Vagina (tissue), 2 donors: ENCODE measurements at regions of chr3 and their contacts with region 1.

Region 1: GRCh38 chr3:186193534-186194450 is 84.9 kb upstream of the ETV5 start:
- DNase-seq: no peak
- H3K4me3 ChIP-seq: peak overlapping the region; percentile 30 to 33
- H3K27ac ChIP-seq: no peak overlapping the region
- H3K4me1 ChIP-seq: peaks cover 12% of the 10 kb centered on the region
- H3K27me3 ChIP-seq: no peaks in the 10 kb centered on the region
- CTCF ChIP-seq: no peak
- POLR2A ChIP-seq: no peak

Region 2: GRCh38 chr3:186124592-186124991 is 69.2 kb before region 1 on chr3:
- intact Hi-C with region 1: no loop called
- DNase-seq: no peak
- H3K4me3 ChIP-seq: no peak overlapping the region
- H3K27ac ChIP-seq: no peak overlapping the region
- H3K4me1 ChIP-seq: no peaks in the 10 kb centered on the region
- H3K27me3 ChIP-seq: no peaks in the 10 kb centered on the region
- CTCF ChIP-seq: no peak
- POLR2A ChIP-seq: no peak

Region 3: GRCh38 chr3:186138272-186138981 is 55.4 kb before region 1 on chr3:
- intact Hi-C with region 1: loop called (anchors 5 kb)
- DNase-seq: peak in 1 of 2 donors; percentile 64
- H3K4me3 ChIP-seq: no peak overlapping the region
- H3K27ac ChIP-seq: no peak overlapping the region
- H3K4me1 ChIP-seq: no peaks in the 10 kb centered on the region
- H3K27me3 ChIP-seq: no peaks in the 10 kb centered on the region
- CTCF ChIP-seq: no peak
- POLR2A ChIP-seq: no peak